ENCODE measurements at regions of chr16 and their contacts with region 1.

Region 1: DNA sequence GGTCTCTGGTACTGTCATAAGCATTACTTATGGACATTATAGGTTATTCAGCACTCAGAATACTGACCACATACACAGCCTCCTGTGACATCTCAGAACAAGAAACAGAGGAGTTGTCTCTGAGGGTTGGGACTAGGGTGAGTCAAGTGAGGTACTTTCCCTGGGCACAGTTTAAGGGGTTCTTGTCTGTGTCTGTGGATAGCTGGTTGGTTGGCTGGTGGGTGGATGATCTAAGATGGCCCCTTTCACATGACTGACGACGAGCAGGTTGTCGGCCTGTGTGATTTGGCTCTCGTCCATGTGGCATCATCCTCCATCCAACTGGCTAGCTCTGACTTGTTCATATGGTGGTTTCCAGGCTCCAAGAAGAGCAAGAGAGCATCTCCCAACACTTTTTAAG is 163.9 kb downstream of the PRKCB start:
- DNase-seq: no peak
- ATAC-seq: peak; percentile 74
- H3K4me3 Mint-ChIP-seq: no peak overlapping the region
- H3K27ac Mint-ChIP-seq: peak overlapping the region; percentile 57
- H3K4me1 Mint-ChIP-seq: peaks cover 68% of the 10 kb centered on the region
- H3K27me3 Mint-ChIP-seq: no peaks in the 10 kb centered on the region
- CTCF ChIP-seq: no peak

Region 2: GRCh38 chr16:23423496-23424049 is 576.1 kb before region 1 on chr16:
- CTCF ChIA-PET with region 1: no interaction called
- POLR2A ChIA-PET with region 1: no interaction called
- intact Hi-C with region 1: no loop called
- DNase-seq: no peak
- ATAC-seq: no peak
- H3K4me3 Mint-ChIP-seq: no peak overlapping the region
- H3K27ac Mint-ChIP-seq: no peak overlapping the region
- H3K4me1 Mint-ChIP-seq: no peaks in the 10 kb centered on the region
- H3K27me3 Mint-ChIP-seq: no peaks in the 10 kb centered on the region
- CTCF ChIP-seq: no peak

Region 3: GRCh38 chr16:23966597-23967394 is 32.9 kb before region 1 on chr16:
- CTCF ChIA-PET with region 1: no interaction called
- POLR2A ChIA-PET with region 1: interaction called, 10 read pairs
- intact Hi-C with region 1: no loop called
- DNase-seq: no peak
- ATAC-seq: peak; percentile 79
- H3K4me3 Mint-ChIP-seq: peak overlapping the region; percentile 59
- H3K27ac Mint-ChIP-seq: peak overlapping the region; percentile 67
- H3K4me1 Mint-ChIP-seq: peaks cover 87% of the 10 kb centered on the region
- H3K27me3 Mint-ChIP-seq: no peaks in the 10 kb centered on the region
- CTCF ChIP-seq: no peak